HepG2 (cell line): ENCODE measurements at regions of chr10 and their contacts with region 1.

Region 1: GRCh38 chr10:103859161-103860086 is 4.0 kb upstream of the SH3PXD2A start:
- DNase-seq: peak; percentile 72
- ATAC-seq: peak; percentile 67
- H3K4me3 ChIP-seq: 0 out of 6 replicates have a peak overlapping the region, but pooled peaks of 1 of the 3 experiments have one; percentile 6
- H3K27ac ChIP-seq: no peak overlapping the region
- H3K4me1 ChIP-seq: peaks cover 34% of the 10 kb centered on the region
- H3K27me3 ChIP-seq: no peaks in the 10 kb centered on the region; a peak in 1 of 5 replicates
- CTCF ChIP-seq: peak; percentile 90
- EP300 ChIP-seq: no peak
- POLR2A ChIP-seq: no peak
- RAD21 ChIP-seq: peak; percentile 76

Region 2: GRCh38 chr10:103752680-103753248 is 106.7 kb before region 1 on chr10:
- CTCF ChIA-PET with region 1: interaction called, 12 read pairs
- POLR2A ChIA-PET with region 1: interaction called, 5 read pairs
- in situ Hi-C with region 1: no loop called
- intact Hi-C with region 1: loop called (anchors 1 kb)
- DNase-seq: peak; percentile 25
- ATAC-seq: no peak
- H3K4me3 ChIP-seq: no peak overlapping the region
- H3K27ac ChIP-seq: no peak overlapping the region
- H3K4me1 ChIP-seq: peaks cover 18% of the 10 kb centered on the region
- H3K27me3 ChIP-seq: no peaks in the 10 kb centered on the region
- CTCF ChIP-seq: peak; percentile 55
- EP300 ChIP-seq: no peak
- POLR2A ChIP-seq: no peak
- RAD21 ChIP-seq: no peak

Region 3: GRCh38 chr10:103781329-103782061 is 77.9 kb before region 1 on chr10:
- CTCF ChIA-PET with region 1: interaction called, 9 read pairs
- POLR2A ChIA-PET with region 1: interaction called, 9 read pairs
- in situ Hi-C with region 1: no loop called
- intact Hi-C with region 1: loop called (anchors 1 kb)
- DNase-seq: peak; percentile 78
- ATAC-seq: peak; percentile 82
- H3K4me3 ChIP-seq: no peak overlapping the region
- H3K27ac ChIP-seq: peak overlapping the region; percentile 23
- H3K4me1 ChIP-seq: peaks cover 51% of the 10 kb centered on the region
- H3K27me3 ChIP-seq: no peaks in the 10 kb centered on the region
- CTCF ChIP-seq: peak; percentile 68
- EP300 ChIP-seq: no peak
- POLR2A ChIP-seq: no peak
- RAD21 ChIP-seq: 0 out of 2 replicates have a peak, but pooled peaks have one; percentile 49

Region 4: GRCh38 chr10:103803941-103804340 is 55.5 kb before region 1 on chr10:
- CTCF ChIA-PET with region 1: no interaction called
- POLR2A ChIA-PET with region 1: no interaction called
- in situ Hi-C with region 1: no loop called
- intact Hi-C with region 1: no loop called
- DNase-seq: no peak
- ATAC-seq: no peak
- H3K4me3 ChIP-seq: no peak overlapping the region
- H3K27ac ChIP-seq: no peak overlapping the region
- H3K4me1 ChIP-seq: peaks cover 72% of the 10 kb centered on the region
- H3K27me3 ChIP-seq: no peaks in the 10 kb centered on the region
- CTCF ChIP-seq: no peak
- EP300 ChIP-seq: no peak
- POLR2A ChIP-seq: no peak
- RAD21 ChIP-seq: no peak

Region 5: DNA sequence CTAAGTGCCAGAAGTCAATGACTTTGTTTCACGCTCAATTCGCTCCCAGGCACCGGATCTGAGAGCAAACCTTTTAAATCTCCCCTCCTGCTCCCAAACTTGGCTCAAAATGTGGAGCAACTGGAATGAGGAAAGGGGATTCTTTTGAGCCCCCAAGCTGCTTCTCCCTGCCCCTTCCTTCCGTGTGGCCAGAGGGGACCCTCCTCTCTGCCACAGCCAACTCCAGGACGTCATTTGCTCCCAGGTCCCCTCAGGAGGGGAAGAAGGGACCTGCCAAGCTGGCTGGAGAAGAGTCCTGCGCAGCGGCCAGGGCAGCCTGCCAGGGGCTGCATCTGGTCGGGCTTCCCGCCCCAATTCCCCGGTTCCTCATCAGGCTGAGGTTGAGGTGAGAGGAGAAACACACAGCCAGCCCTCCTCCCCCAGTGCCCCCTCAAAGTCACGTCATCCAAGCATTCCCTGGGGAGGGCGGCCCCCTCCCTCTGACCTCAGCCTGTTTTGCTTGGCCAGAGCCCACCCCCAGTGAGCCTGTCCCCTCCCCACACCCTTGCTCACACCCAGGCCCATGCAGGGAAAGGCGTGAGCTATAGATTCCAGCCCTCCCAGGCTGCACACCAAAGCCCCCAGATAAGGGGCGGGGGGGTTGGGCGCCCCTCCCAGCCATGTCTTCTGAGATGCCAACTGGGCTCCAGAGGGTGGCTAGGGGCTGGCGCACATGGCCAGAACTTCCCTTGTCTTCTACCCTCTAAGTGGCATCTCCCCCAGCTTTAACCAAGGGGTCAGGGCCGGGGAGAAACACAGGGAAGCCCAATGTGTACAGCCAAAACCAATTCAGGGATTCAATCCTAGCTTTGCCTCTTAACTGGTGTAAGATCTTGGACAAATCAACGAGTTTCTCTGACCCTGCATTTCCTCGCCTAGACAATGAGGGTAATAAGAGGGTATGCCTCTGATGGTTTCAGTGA is 39.0 kb before region 1 on chr10:
- CTCF ChIA-PET with region 1: no interaction called
- POLR2A ChIA-PET with region 1: interaction called, 16 read pairs
- in situ Hi-C with region 1: no loop called
- intact Hi-C with region 1: loop called (anchors 5 kb)
- DNase-seq: no peak
- ATAC-seq: no peak
- H3K4me3 ChIP-seq: no peak overlapping the region; a peak in 1 of 6 replicates
- H3K27ac ChIP-seq: no peak overlapping the region
- H3K4me1 ChIP-seq: peaks cover 78% of the 10 kb centered on the region
- H3K27me3 ChIP-seq: no peaks in the 10 kb centered on the region
- CTCF ChIP-seq: no peak
- EP300 ChIP-seq: no peak
- POLR2A ChIP-seq: no peak
- RAD21 ChIP-seq: no peak

Region 6: GRCh38 chr10:103847909-103848468 is 11.4 kb before region 1 on chr10:
- CTCF ChIA-PET with region 1: no interaction called
- POLR2A ChIA-PET with region 1: interaction called, 12 read pairs
- in situ Hi-C with region 1: no loop called
- intact Hi-C with region 1: no loop called
- DNase-seq: peak; percentile 21
- ATAC-seq: peak; percentile 79
- H3K4me3 ChIP-seq: no peak overlapping the region
- H3K27ac ChIP-seq: peak overlapping the region; percentile 16
- H3K4me1 ChIP-seq: peaks cover 93% of the 10 kb centered on the region
- H3K27me3 ChIP-seq: no peaks in the 10 kb centered on the region
- CTCF ChIP-seq: 0 out of 2 replicates have a peak, but pooled peaks have one; percentile 11
- EP300 ChIP-seq: no peak
- POLR2A ChIP-seq: no peak
- RAD21 ChIP-seq: no peak